ENCODE measurements at regions of chr12 and their contacts with region 1.

Region 1: GRCh38 chr12:64679487-64679983 is 69.2 kb downstream of the RASSF3 start:
- DNase-seq: peak; percentile 59
- H3K4me3 ChIP-seq: peak overlapping the region in 2 of 3 experiments; percentile 33 to 59
- H3K27ac ChIP-seq: peak overlapping the region; percentile 85
- H3K4me1 ChIP-seq: peaks cover 29% of the 10 kb centered on the region
- H3K27me3 ChIP-seq: no peaks in the 10 kb centered on the region
- CTCF ChIP-seq: no peak

Region 2: GRCh38 chr12:64293654-64294364 is 385.7 kb before region 1 on chr12:
- dilution Hi-C with region 1: no loop called
- DNase-seq: no peak
- H3K4me3 ChIP-seq: no peak overlapping the region
- H3K27ac ChIP-seq: no peak overlapping the region
- H3K4me1 ChIP-seq: no peaks in the 10 kb centered on the region
- H3K27me3 ChIP-seq: no peaks in the 10 kb centered on the region
- CTCF ChIP-seq: no peak

Region 3: DNA sequence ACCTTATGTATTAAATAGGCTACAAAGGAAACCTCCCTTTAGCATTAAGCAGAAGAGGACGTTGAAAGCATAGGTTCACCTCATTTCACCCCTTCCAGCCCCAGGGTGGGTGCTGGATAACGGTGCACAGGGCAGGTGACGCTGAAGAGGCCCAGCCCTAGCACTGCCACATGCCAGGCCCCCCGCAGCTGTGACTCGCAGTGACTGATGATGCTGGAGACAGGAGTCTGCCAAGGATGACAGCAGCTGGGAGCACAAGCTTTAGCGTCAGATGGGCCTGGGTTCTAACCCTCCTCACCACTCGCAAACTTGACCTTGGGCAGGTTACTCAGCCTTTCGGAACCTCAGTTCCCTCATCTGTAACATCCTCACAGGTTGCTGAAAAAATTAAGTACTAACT is 150.9 kb before region 1 on chr12:
- dilution Hi-C with region 1: loop called (anchors 25 kb)
- DNase-seq: no peak
- H3K4me3 ChIP-seq: no peak overlapping the region
- H3K27ac ChIP-seq: no peak overlapping the region
- H3K4me1 ChIP-seq: no peaks in the 10 kb centered on the region
- H3K27me3 ChIP-seq: no peaks in the 10 kb centered on the region
- CTCF ChIP-seq: no peak

Region 4: DNA sequence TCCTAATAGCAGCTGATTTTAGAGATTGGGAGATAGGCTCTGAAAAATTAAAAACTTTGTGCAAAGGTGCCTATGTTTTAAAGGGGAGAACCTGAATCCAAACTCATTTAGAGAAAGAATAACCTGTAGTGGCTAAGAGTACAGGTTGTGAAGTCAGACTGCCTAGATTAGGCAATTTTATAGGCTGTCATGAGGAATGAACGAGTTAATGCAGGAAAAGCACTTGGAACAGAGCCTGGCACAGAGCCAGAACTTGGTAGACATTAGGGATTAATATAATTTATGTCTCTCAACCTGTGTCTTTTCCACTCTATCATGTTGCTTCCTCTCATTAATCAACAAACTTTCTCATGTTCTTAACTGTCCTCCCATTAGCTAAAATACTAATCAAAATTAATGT is 343.4 kb after region 1 on chr12:
- dilution Hi-C with region 1: no loop called
- DNase-seq: no peak
- H3K4me3 ChIP-seq: no peak overlapping the region
- H3K27ac ChIP-seq: no peak overlapping the region
- H3K4me1 ChIP-seq: no peaks in the 10 kb centered on the region
- H3K27me3 ChIP-seq: peaks cover 11% of the 10 kb centered on the region
- CTCF ChIP-seq: no peak